Caco-2 (cell line): ENCODE measurements at regions of chr15 and their contacts with region 1.

Region 1: GRCh38 chr15:48520376-48521155 is 124.9 kb downstream of the FBN1 start:
- DNase-seq: peak in 1 of 2 experiments; percentile 24
- H3K4me3 ChIP-seq: no peak overlapping the region
- H3K4me3 Mint-ChIP-seq: no peak overlapping the region
- H3K27ac Mint-ChIP-seq: no peak overlapping the region
- H3K4me1 ChIP-seq: no peaks in the 10 kb centered on the region
- H3K4me1 Mint-ChIP-seq: no peaks in the 10 kb centered on the region
- H3K27me3 ChIP-seq: no peaks in the 10 kb centered on the region
- H3K27me3 Mint-ChIP-seq: peaks cover 24% of the 10 kb centered on the region
- CTCF ChIP-seq: peak in 1 of 2 experiments; percentile 26

Region 2: GRCh38 chr15:48358229-48358641 is 162.3 kb before region 1 on chr15:
- CTCF ChIA-PET with region 1: no interaction called
- POLR2A ChIA-PET with region 1: no interaction called
- intact Hi-C with region 1: loop called (anchors 1 kb)
- DNase-seq: no peak
- H3K4me3 ChIP-seq: no peak overlapping the region
- H3K4me3 Mint-ChIP-seq: no peak overlapping the region
- H3K27ac Mint-ChIP-seq: no peak overlapping the region
- H3K4me1 ChIP-seq: no peaks in the 10 kb centered on the region
- H3K4me1 Mint-ChIP-seq: peaks cover 13% of the 10 kb centered on the region
- H3K27me3 ChIP-seq: no peaks in the 10 kb centered on the region
- H3K27me3 Mint-ChIP-seq: no peaks in the 10 kb centered on the region
- CTCF ChIP-seq: peak; percentile 45 to 59

Region 3: DNA sequence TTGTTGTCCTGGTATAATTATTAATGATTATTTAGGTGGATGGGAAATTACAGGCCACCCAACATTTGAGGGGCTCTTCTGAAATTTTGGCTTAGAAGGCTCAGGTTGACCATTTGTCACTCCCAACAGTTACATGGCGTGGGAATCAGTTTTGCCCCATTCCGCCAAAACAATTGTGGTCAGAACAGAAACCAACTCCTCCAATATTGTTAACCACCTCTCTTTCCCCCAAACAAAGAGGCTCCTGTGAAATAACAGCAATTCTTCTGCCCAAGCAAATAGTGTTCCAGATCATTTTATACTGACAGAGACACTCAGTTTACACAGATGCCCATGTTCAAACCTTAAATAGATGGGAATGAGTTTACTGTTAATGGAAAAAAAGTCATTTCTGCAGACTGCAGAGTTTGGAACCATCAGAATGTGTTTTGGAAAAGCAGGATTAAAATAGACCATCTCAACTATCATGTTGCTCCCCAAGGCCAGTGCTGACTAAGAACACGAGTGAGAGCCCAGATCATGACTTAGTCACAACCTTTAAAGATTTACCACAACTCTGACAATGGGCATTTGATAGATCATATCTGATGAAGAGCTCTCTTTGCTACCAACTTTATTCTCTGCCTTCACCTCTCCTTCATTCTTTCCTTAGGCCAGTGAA is 87.2 kb before region 1 on chr15:
- CTCF ChIA-PET with region 1: no interaction called
- POLR2A ChIA-PET with region 1: no interaction called
- intact Hi-C with region 1: no loop called
- DNase-seq: no peak
- H3K4me3 ChIP-seq: no peak overlapping the region
- H3K4me3 Mint-ChIP-seq: no peak overlapping the region
- H3K27ac Mint-ChIP-seq: no peak overlapping the region
- H3K4me1 ChIP-seq: no peaks in the 10 kb centered on the region
- H3K4me1 Mint-ChIP-seq: no peaks in the 10 kb centered on the region
- H3K27me3 ChIP-seq: no peaks in the 10 kb centered on the region
- H3K27me3 Mint-ChIP-seq: peaks cover 5% of the 10 kb centered on the region
- CTCF ChIP-seq: no peak